Endothelial cell of umbilical vein (primary cell): ENCODE measurements at regions of chr1 and their contacts with region 1.

Region 1: DNA sequence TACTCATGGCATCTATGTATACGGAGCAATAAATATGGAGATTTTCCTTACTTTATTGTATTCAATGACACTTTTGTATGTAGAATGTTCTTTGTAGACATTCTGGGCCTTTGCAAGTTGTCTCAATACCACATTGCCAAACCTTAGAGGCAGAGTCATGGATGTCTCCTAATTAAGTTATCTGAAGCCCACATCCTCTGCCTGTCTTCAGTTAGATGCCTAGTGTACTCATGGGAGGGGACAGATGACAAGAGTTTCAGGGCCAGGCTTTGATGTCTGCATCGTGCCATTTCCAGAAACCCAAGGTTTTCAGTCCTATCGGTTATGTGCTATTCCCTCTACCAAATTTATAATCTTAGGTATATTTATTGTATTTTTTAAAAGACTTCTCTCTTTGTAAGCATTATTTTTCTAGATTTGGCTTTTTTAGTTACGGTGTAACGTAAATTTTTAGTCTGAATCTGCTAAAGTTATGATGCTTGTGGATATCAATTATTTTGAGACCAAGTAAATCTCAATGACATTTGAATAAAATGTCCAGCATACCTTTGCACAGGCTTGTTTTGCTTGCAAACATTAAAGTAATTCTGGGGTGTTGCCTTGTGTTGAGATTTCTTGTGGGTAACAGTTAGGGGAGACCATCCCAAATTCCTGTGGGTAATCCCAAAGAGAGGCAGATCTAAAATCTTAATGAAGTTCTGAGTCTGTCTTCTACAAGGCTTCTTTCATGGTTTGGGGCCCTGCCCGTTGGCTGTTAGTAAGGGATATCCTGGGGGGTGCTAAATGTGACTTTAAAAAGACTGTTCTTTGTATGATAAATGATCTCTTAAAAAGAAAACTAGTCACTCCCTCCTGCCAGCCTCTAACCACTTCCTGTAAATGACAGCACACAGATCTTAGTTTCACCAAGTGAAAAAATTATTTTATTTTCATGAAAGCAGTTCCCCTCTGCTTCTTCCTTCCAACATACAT is 8.0 kb upstream of the MACF1 start:
- DNase-seq: peak; percentile 70
- H3K4me3 ChIP-seq: no peak overlapping the region
- H3K27ac ChIP-seq: peak overlapping the region; percentile 30
- H3K4me1 ChIP-seq: peaks cover 57% of the 10 kb centered on the region
- H3K27me3 ChIP-seq: no peaks in the 10 kb centered on the region
- CTCF ChIP-seq: no peak
- POLR2A ChIP-seq: no peak

Region 2: DNA sequence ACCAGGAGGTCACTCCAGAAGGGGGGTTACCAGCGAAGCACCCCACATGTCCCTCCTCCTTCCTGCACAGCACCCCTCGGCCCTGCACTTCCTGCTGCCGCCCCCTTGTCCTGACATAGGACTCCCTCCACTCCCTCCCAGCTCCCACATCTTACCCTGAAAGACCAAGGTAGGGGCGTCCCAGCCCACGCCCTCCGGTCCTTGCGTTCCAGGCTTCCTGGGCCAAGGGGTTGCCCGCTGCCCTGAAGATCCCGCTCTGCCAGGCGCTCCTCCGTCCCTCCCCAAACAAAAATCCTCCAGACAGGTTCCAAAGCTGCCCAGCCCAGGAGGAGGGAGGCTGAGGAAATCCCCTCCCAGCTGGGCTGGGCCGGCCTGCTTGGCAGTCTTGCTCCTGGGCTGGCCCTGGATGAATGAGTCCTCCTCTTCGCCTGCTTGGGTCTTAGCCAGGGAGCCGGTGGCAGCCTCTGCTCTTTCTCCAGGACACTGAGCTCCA is 255.0 kb before region 1 on chr1 and contains the start of gene RHBDL2:
- CTCF ChIA-PET with region 1: no interaction called
- POLR2A ChIA-PET with region 1: no interaction called
- dilution Hi-C with region 1: no loop called
- intact Hi-C with region 1: no loop called
- DNase-seq: peak; percentile 15
- H3K4me3 ChIP-seq: peak within 1 kb of the TSS in 1 of 3 experiments; percentile 28
- H3K27ac ChIP-seq: no peak within 1 kb of the TSS
- H3K4me1 ChIP-seq: no peaks in the 10 kb centered on the region
- H3K27me3 ChIP-seq: no peaks in the 10 kb centered on the region
- CTCF ChIP-seq: no peak
- POLR2A ChIP-seq: no peak
- total RNA-seq, gene RHBDL2: 0.32 and 1.4 TPM in 2 replicates

Region 3: DNA sequence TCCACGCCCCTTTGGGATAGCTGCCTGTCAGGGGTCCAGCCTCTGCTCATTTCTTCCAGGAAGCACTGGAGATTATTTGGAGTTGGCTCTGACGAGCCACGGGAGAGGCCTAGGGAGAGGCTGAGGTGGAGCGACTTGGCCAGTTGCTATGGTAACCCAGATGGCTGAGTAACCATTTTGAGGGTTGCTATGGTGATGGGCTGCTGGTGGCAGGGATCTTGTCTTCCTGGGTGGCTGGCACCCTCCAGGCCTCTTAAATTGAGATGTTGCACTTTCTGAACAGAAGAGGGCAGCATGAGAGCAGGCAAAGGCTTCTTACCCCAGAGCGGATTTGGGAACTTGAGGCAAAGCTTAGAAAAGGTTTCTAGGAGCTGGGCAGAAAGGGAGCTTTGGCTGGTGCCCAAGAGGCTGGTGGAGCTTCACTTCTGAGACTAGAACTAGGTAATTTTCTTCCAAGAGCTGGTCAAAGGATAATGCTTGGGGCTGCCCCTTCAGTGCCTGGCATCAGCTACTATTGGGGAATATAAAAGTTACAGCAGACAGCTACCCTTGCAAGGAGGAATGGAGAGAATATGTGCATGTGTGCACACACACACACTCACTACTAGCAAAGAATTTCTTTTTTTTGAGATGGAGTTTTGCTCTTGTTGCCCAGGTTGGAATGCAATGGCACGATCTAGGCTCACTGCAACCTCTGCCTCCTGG is 97.8 kb before region 1 on chr1:
- CTCF ChIA-PET with region 1: interaction called, 73 read pairs
- POLR2A ChIA-PET with region 1: no interaction called
- dilution Hi-C with region 1: no loop called
- intact Hi-C with region 1: loop called (anchors 1 kb)
- DNase-seq: peak; percentile 61
- H3K4me3 ChIP-seq: no peak overlapping the region
- H3K27ac ChIP-seq: no peak overlapping the region
- H3K4me1 ChIP-seq: peaks cover 12% of the 10 kb centered on the region
- H3K27me3 ChIP-seq: no peaks in the 10 kb centered on the region
- CTCF ChIP-seq: peak; percentile 65 to 68
- POLR2A ChIP-seq: no peak

Region 4: DNA sequence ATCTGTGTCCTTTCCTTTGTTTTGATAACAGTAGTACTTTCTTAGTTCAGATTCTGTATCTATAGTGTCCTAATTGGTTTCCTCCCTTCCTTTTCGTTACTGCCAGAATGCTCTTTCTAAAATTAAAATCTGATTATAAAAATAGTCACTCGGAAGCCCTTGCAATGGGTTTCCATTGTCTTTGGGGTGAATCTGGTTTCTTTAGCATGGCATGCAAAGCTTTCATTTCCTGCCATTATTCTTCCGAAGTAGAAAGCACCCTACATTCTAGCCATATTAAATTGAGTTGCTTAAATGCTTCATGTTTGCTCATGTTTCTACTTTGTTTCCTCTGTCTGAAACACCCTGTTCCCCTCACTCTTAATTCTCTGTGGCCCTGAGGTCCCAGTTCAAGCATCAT is 45.3 kb before region 1 on chr1:
- CTCF ChIA-PET with region 1: interaction called, 10 read pairs
- POLR2A ChIA-PET with region 1: interaction called, 7 read pairs
- dilution Hi-C with region 1: no loop called
- intact Hi-C with region 1: loop called (anchors 2 kb)
- DNase-seq: peak; percentile 59
- H3K4me3 ChIP-seq: peak overlapping the region in 2 of 3 experiments; percentile 10 to 40
- H3K27ac ChIP-seq: peak overlapping the region; percentile 80
- H3K4me1 ChIP-seq: peaks cover 73% of the 10 kb centered on the region
- H3K27me3 ChIP-seq: no peaks in the 10 kb centered on the region
- CTCF ChIP-seq: no peak
- POLR2A ChIP-seq: no peak

Region 5: DNA sequence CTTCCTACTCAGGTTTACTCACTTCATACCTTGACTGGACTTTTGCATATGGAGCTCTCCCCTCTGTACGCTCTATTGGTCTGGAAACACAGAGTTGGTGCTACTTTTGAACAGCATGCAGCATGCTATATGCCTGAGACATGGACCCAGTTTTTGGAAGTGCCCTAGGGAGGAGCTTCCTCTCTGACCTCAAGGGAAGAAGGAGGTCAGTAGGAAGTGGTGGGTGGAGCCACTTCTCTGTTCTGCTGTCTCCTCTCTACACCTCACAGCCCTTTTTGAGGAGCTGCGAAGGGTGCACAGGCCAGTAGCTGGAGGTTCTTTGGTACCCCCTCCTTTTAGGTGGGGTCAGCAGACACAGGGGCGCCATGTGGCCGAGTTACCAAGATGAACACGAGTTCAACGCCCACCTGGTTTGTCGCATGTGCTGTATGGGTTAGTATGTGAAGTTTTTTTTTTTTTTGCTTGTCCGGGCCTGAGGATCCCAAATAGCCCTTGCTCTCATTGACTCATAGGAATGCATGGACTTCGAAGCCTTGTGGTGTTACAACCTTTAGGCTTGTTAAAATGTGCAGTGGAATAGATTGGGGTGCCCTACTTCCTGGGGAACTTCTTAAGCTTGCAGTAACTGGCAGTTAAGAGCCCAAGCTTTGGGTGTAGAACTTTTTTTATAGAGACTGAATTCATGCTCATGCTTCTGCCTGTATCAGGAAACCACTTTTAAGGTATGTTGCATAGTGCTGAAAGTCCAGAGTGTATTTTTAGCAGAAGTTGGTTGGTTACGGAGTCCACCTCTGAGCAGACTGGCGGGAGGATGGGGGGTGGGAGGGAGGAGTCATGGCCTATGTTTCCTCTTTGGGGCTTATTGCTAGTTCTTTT is 18.7 kb after region 1 on chr1:
- CTCF ChIA-PET with region 1: interaction called, 41 read pairs
- POLR2A ChIA-PET with region 1: interaction called, 3 read pairs
- dilution Hi-C with region 1: no loop called
- intact Hi-C with region 1: no loop called
- DNase-seq: no peak
- H3K4me3 ChIP-seq: no peak overlapping the region
- H3K27ac ChIP-seq: no peak overlapping the region
- H3K4me1 ChIP-seq: peaks cover 34% of the 10 kb centered on the region
- H3K27me3 ChIP-seq: no peaks in the 10 kb centered on the region
- CTCF ChIP-seq: no peak
- POLR2A ChIP-seq: no peak

Region 6: DNA sequence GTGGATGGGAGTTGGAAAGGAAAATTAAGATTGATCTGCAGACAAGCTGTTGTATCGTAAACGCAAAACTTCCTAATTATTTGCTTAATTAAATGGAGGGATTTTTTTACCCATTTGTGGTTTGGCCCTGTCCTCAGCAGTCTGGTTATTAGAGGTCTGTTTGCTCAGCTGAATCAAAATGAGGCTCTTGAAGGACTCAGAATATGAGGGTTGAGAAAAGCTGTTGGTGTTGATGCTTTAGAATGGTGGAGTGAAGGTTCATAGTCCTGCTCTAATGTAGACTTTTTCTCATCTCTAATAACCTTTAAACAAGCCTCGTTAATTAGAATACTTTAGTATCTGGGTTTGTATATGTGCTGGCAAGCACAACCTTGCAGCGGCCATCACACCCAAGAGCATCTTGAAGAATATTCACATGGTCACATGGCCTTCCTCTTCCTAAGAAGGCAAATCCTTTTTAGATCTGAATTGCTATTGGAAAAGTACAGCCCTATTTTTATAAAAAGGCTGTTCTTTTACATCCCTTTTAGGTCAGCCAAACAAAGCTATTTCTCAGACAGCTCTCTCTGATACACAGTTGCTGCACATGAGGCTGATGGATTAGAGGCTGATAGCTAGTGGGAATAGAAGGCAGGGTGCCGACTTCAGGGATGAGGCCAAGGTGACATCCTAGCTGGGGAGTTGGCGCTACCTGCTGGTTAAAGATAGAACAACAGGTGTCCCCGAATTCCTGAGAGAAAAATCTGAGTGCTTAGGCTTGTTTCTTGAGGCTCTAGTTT is 61.8 kb after region 1 on chr1:
- CTCF ChIA-PET with region 1: interaction called, 110 read pairs
- POLR2A ChIA-PET with region 1: interaction called, 9 read pairs
- dilution Hi-C with region 1: no loop called
- intact Hi-C with region 1: loop called (anchors 1 kb)
- DNase-seq: peak; percentile 75
- H3K4me3 ChIP-seq: no peak overlapping the region
- H3K27ac ChIP-seq: no peak overlapping the region
- H3K4me1 ChIP-seq: no peaks in the 10 kb centered on the region
- H3K27me3 ChIP-seq: no peaks in the 10 kb centered on the region
- CTCF ChIP-seq: peak; percentile 70 to 71
- POLR2A ChIP-seq: no peak

Region 7: GRCh38 chr1:39317910-39318633 is 121.5 kb after region 1 on chr1:
- CTCF ChIA-PET with region 1: interaction called, 25 read pairs
- POLR2A ChIA-PET with region 1: no interaction called
- dilution Hi-C with region 1: no loop called
- intact Hi-C with region 1: loop called (anchors 2 kb)
- DNase-seq: peak; percentile 91
- H3K4me3 ChIP-seq: peak overlapping the region in 2 of 3 experiments; percentile 3 to 33
- H3K27ac ChIP-seq: peak overlapping the region; percentile 71
- H3K4me1 ChIP-seq: peaks cover 24% of the 10 kb centered on the region
- H3K27me3 ChIP-seq: no peaks in the 10 kb centered on the region
- CTCF ChIP-seq: no peak
- POLR2A ChIP-seq: peak; percentile 31

Region 8: GRCh38 chr1:39738622-39739366 is 542.3 kb after region 1 on chr1 and contains the start of gene PPIE:
- CTCF ChIA-PET with region 1: no interaction called
- POLR2A ChIA-PET with region 1: no interaction called
- dilution Hi-C with region 1: no loop called
- intact Hi-C with region 1: no loop called
- DNase-seq: peak; percentile 88
- H3K4me3 ChIP-seq: peak within 1 kb of the TSS; percentile 60 to 88 (median 81)
- H3K27ac ChIP-seq: peak within 1 kb of the TSS; percentile 43
- H3K4me1 ChIP-seq: peaks cover 8% of the 10 kb centered on the region
- H3K27me3 ChIP-seq: peaks cover 3 to 9% of the 10 kb centered on the region in 2 experiments
- CTCF ChIP-seq: no peak
- POLR2A ChIP-seq: peak; percentile 85
- total RNA-seq, gene PPIE: 42.6 and 44.4 TPM in 2 replicates

Region 9: DNA sequence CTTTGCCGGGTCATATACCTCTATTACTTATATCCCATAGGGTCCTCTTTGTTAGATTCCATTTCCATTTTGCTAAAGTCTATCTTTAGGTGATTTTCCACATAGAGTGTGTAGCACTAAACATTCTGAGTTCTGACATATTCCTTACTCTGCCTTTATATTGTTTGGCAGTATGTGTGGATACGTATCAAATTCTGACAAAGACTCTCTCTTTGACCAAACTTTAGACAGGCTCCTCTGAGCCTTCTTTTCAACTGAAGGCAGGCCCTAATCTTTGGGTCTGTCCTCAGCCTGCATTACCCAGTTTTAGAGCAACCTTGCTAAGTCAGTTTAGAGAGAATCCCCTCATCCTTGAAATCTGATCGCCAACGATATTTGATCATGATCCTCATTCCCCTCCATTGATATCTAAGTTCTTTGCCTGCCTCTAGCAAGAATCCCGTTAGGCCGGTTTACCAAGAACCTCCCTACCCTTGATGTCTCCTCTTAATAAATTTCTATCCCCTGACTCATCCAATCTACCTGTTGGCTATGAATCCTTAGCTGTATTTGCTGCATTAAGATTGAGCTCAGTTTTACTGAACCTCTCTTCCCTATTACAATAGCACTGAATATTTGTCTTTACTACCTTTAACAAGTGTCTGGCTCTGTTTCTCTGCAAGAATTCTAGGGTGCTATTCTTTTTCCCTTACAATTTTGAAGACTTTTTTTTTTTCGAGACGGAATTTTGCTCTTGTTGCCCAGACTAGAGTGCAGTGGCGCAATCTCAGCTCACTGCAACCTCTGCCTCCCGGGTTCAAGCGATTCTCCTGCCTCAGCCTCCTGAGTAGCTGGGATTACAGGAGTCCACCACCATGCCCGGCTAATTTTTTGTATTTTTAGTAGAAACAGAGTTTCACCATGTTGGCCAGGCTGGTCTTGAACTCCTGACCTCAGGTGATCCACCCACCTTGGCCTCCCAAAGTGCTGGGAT is 911.0 kb after region 1 on chr1:
- CTCF ChIA-PET with region 1: no interaction called
- POLR2A ChIA-PET with region 1: no interaction called
- dilution Hi-C with region 1: no loop called
- intact Hi-C with region 1: no loop called
- DNase-seq: no peak
- H3K4me3 ChIP-seq: no peak overlapping the region
- H3K27ac ChIP-seq: no peak overlapping the region
- H3K4me1 ChIP-seq: no peaks in the 10 kb centered on the region
- H3K27me3 ChIP-seq: peaks cover 6 to 12% of the 10 kb centered on the region in 2 experiments
- CTCF ChIP-seq: no peak
- POLR2A ChIP-seq: no peak